ENCODE measurements at regions of chr16 and their contacts with region 1.

Region 1: GRCh38 chr16:48353565-48354163 is 31.5 kb downstream of the SIAH1 start:
- DNase-seq: peak; percentile 77
- H3K4me3 Mint-ChIP-seq: no peak overlapping the region
- H3K27ac Mint-ChIP-seq: peak overlapping the region; percentile 43
- H3K4me1 Mint-ChIP-seq: peaks cover 20% of the 10 kb centered on the region
- H3K27me3 Mint-ChIP-seq: no peaks in the 10 kb centered on the region

Region 2: GRCh38 chr16:48318630-48319029 is 35.0 kb before region 1 on chr16:
- CTCF ChIA-PET with region 1: no interaction called
- POLR2A ChIA-PET with region 1: no interaction called
- intact Hi-C with region 1: no loop called
- DNase-seq: peak; percentile 29
- H3K4me3 Mint-ChIP-seq: no peak overlapping the region
- H3K27ac Mint-ChIP-seq: peak overlapping the region; percentile 76
- H3K4me1 Mint-ChIP-seq: peaks cover 37% of the 10 kb centered on the region
- H3K27me3 Mint-ChIP-seq: no peaks in the 10 kb centered on the region

Region 3: GRCh38 chr16:48332978-48333377 is 20.7 kb before region 1 on chr16:
- CTCF ChIA-PET with region 1: no interaction called
- POLR2A ChIA-PET with region 1: no interaction called
- intact Hi-C with region 1: no loop called
- DNase-seq: no peak
- H3K4me3 Mint-ChIP-seq: no peak overlapping the region
- H3K27ac Mint-ChIP-seq: no peak overlapping the region
- H3K4me1 Mint-ChIP-seq: no peaks in the 10 kb centered on the region
- H3K27me3 Mint-ChIP-seq: no peaks in the 10 kb centered on the region

Region 4: DNA sequence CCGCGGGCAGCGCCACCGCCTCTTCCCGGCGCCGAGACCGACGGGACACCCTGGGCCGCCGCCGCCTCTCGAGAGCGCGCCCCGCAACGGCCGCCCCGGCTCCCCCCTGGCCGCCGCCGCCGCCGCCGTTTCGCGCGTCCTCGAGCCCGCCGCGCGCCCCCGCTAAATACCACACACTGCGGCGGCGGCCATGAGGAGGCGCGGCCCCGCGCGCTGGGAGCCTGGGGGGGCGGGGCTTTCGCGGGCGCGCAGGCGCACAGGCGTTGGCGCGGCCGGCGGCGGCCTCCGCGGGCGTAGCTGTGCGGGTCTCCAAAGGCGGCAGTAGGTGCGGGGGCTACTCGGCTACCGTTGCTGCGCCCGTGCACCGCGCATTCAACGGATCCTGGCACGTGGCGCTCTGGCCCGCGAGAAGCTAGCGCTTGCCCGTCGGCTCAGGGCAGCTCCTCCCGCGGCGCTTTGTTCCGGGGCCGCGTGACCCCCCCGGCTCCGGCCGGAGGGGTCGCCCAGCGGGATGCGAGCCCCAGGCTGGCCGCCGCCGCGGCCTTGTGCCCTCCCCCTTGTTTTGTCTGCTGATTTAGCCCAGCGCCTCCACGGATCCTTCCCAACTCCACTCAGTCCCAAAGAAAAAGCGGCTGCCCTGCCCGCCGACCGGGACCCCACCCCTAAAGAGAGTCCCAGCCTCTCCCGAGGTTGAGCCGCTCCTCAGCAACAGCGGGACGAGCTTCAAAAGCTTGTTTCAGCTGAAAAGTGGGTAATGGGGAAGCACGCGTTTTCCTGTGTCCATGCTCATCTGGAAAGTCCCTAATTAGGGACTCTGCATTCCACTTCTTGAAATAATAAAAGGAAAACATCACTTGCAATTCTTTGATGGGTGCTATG is 31.8 kb after region 1 on chr16 and contains the start of gene SIAH1:
- CTCF ChIA-PET with region 1: interaction called, 3 read pairs
- POLR2A ChIA-PET with region 1: no interaction called
- intact Hi-C with region 1: loop called (anchors 5 kb)
- DNase-seq: peak; percentile 88
- H3K4me3 Mint-ChIP-seq: peak within 1 kb of the TSS; percentile 92
- H3K27ac Mint-ChIP-seq: peak within 1 kb of the TSS; percentile 86
- H3K4me1 Mint-ChIP-seq: peaks cover 18% of the 10 kb centered on the region
- H3K27me3 Mint-ChIP-seq: no peaks in the 10 kb centered on the region
- total RNA-seq, gene SIAH1: 13.0 to 13.8 TPM

Region 5: DNA sequence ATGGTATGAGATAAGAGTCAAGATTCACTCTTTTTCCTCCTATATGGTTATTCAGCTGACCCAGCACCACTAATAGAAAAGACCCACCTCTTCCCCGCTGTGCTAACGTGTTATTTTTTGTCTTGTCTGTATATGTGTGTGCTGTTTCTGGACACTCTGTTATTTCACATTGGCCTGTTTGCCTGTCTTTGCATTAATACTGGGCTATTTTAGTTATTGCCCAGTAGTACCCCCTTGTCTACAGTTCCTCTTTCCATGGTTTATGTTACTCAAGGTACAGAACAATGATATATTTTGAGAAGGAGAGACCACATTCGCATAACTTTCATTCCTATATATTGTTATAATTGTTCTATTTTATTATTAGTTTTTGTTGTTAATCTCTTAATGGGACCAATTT is 105.5 kb after region 1 on chr16:
- CTCF ChIA-PET with region 1: interaction called, 3 read pairs
- POLR2A ChIA-PET with region 1: no interaction called
- intact Hi-C with region 1: loop called (anchors 5 kb)
- DNase-seq: no peak
- H3K4me3 Mint-ChIP-seq: no peak overlapping the region
- H3K27ac Mint-ChIP-seq: no peak overlapping the region
- H3K4me1 Mint-ChIP-seq: peaks cover 13% of the 10 kb centered on the region
- H3K27me3 Mint-ChIP-seq: peaks cover 31% of the 10 kb centered on the region

Region 6: GRCh38 chr16:48526058-48526957 is 172.6 kb after region 1 on chr16:
- CTCF ChIA-PET with region 1: interaction called, 5 read pairs
- POLR2A ChIA-PET with region 1: no interaction called
- intact Hi-C with region 1: loop called (anchors 1 kb)
- DNase-seq: peak; percentile 65
- H3K4me3 Mint-ChIP-seq: no peak overlapping the region
- H3K27ac Mint-ChIP-seq: no peak overlapping the region
- H3K4me1 Mint-ChIP-seq: no peaks in the 10 kb centered on the region
- H3K27me3 Mint-ChIP-seq: no peaks in the 10 kb centered on the region

Region 7: GRCh38 chr16:48542020-48542473 is 188.4 kb after region 1 on chr16:
- CTCF ChIA-PET with region 1: no interaction called
- POLR2A ChIA-PET with region 1: no interaction called
- intact Hi-C with region 1: no loop called
- DNase-seq: peak; percentile 25
- H3K4me3 Mint-ChIP-seq: no peak overlapping the region
- H3K27ac Mint-ChIP-seq: no peak overlapping the region
- H3K4me1 Mint-ChIP-seq: peaks cover 16% of the 10 kb centered on the region
- H3K27me3 Mint-ChIP-seq: no peaks in the 10 kb centered on the region

Region 8: GRCh38 chr16:48632137-48632774 is 278.6 kb after region 1 on chr16:
- CTCF ChIA-PET with region 1: interaction called, 67 read pairs
- POLR2A ChIA-PET with region 1: no interaction called
- intact Hi-C with region 1: loop called (anchors 1 kb)
- DNase-seq: no peak
- H3K4me3 Mint-ChIP-seq: no peak overlapping the region
- H3K27ac Mint-ChIP-seq: no peak overlapping the region
- H3K4me1 Mint-ChIP-seq: peaks cover 8% of the 10 kb centered on the region
- H3K27me3 Mint-ChIP-seq: peaks cover 2% of the 10 kb centered on the region

Region 9: GRCh38 chr16:49350265-49351095 is 996.8 kb after region 1 on chr16:
- CTCF ChIA-PET with region 1: no interaction called
- POLR2A ChIA-PET with region 1: no interaction called
- intact Hi-C with region 1: no loop called
- DNase-seq: peak; percentile 59
- H3K4me3 Mint-ChIP-seq: no peak overlapping the region
- H3K27ac Mint-ChIP-seq: no peak overlapping the region
- H3K4me1 Mint-ChIP-seq: no peaks in the 10 kb centered on the region
- H3K27me3 Mint-ChIP-seq: peaks cover 19% of the 10 kb centered on the region